Sciatic nerve (tissue), 2 donors: ENCODE measurements at regions of chr7 and their contacts with region 1.

Region 1: DNA sequence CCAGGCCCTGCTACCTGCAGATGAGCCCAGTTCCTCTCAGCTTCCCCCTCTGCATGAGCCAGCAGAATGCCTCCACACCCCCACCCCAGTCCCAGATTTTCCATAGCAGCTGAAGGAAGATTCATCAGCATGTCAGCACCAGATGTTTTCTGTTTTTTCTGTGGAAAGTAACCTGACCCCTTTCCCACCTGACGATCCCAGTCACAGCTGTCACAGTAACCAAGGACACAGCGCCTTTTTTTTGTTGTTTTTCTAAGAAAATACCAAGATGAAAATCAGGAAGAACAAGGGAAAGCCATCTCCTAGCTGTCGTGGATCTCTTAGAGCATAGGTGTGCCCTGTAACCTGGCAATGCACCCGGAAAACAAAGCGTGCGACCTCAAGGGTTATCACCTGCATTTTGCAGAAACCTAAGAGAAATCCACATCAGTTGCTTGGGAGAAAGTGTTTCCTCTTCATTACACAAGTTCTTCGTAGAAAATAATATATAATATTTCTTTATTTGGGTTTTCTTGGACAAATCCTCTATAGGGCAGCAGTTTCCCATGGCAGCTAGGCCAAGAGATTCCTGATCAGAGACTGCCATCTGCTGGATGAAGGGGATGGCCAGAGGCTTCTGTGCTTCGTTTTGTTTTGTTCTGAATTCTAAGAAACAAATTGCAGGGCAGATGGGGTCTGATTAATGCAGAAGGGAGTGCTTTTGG is 401.9 kb downstream of the TNS3 start:
- DNase-seq: peak; percentile 70
- ATAC-seq: peak; percentile 89

Region 2: GRCh38 chr7:45923290-45923689 is 1256.7 kb before region 1 on chr7:
- intact Hi-C with region 1: loop called (anchors 5 kb)
- DNase-seq: peak; percentile 85
- ATAC-seq: peak; percentile 77

Region 3: GRCh38 chr7:47091141-47091540 is 88.8 kb before region 1 on chr7:
- intact Hi-C with region 1: loop called (anchors 10 kb)
- DNase-seq: no peak
- ATAC-seq: no peak